ENCODE measurements at regions of chr1 and their contacts with region 1.

Region 1: GRCh38 chr1:177246710-177247580 is 76.2 kb downstream of the BRINP2 start:
- DNase-seq: no peak
- ATAC-seq: no peak
- H3K4me3 ChIP-seq: no peak overlapping the region
- H3K27ac ChIP-seq: no peak overlapping the region
- H3K4me1 ChIP-seq: no peaks in the 10 kb centered on the region
- H3K27me3 ChIP-seq: peaks cover 0 to 13% (median 0%) of the 10 kb centered on the region in 7 donors
- CTCF ChIP-seq: no peak

Region 2: GRCh38 chr1:177780096-177780700 is 533.3 kb after region 1 on chr1:
- intact Hi-C with region 1: loop called in 2 of 10 experiments (anchors 5 to 10 kb)
- DNase-seq: no peak
- ATAC-seq: peak in 5 of 8 donors; percentile 44 to 67 (median 65)
- H3K4me3 ChIP-seq: no peak overlapping the region
- H3K27ac ChIP-seq: no peak overlapping the region
- H3K4me1 ChIP-seq: no peaks in the 10 kb centered on the region
- H3K27me3 ChIP-seq: peaks cover 0 to 52% (median 15%) of the 10 kb centered on the region in 7 donors
- CTCF ChIP-seq: peak in 8 of 9 donors; percentile 39 to 64 (median 49)